K562 (cell line): ENCODE measurements at regions of chr18 and their contacts with region 1.

Region 1: DNA sequence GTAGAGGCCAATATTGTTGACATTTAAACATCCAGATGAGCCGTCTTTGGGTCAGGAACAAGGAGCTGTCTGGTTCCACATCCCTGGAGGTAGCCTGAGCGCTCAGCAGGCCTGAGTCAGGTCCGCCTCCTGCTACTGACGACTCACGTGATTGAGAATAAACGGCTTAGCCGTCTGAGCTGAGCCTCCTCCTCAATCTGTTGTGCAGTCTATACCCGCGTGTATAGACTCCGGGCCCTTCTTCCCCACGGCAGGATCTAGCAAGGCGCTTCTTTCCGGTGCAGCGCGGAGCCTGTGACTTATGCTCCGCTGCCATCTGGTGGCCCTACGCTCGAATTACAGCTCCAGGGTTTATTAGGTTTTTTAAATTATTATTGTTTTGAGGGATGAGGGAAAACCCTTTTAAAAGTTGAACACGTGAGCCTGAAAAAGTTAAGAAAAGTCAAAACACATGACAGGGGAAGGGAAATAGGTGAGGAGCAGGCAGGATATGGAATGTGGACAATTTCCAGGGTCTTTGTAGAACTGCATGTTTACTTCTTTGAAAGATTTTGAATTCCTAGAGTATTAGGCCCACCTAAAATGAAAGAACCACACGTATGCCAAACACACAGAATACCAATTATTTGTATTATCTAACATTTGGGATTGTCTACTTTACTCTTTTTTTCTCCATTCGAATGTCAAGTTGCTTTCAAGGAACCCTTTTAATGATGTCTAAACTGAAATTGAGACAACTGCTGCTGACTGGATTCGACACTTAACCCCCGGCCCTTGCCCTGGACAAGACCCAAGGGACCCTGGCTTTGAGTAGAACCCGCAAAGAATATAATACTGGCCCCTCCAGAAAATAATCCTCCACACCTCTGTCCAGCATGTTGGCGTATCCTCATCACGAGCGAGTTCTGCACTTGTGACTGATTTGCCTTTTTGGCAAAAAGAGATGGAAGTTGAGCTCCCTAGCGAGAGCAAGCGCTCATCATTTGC is 112.4 kb upstream of the ZNF236 start:
- DNase-seq: peak; percentile 41 to 56 (median 54)
- ATAC-seq: peak; percentile 90
- H3K4me3 ChIP-seq: no peak overlapping the region
- H3K27ac ChIP-seq: no peak overlapping the region
- H3K4me1 ChIP-seq: peaks cover 0 to 10% of the 10 kb centered on the region in 2 experiments; a peak in 1 of 5 replicates
- H3K27me3 ChIP-seq: peaks cover 0 to 23% of the 10 kb centered on the region in 2 experiments; a peak in 2 of 5 replicates
- CTCF ChIP-seq: peak; percentile 68 to 79 (median 72)
- EP300 ChIP-seq: no peak
- POLR2A ChIP-seq: no peak
- RAD21 ChIP-seq: peak; percentile 65 to 75

Region 2: DNA sequence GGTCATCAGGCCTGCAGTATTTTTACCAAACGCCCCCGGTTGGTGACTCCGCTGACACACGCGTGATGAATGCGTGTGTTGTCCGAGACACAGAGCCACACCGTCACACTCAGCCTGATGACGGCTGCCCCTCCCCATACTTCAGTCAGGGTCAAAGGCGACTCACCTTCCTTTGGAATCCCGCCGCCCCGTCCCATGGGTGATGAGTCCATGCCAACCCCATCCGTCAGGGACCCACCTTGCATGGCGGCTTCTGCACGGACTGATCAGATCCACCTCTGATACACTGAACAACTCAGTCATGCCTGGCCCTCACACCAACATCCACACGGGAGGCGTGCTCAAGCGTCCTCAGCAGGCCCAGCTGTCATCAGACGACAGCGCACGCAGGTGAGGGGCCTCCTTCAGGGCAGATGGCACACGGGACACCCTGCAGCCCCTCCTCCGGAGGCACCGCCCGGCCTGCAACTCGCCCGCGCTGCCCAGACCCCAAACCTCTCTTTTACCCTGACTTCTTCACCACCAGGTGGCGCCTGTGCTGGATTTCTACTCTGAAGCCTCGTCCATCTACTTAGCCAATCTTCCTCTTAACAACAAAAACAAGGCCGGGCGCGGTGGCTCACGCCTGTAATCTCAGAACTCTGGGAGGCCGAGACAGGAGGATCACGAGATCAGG is 304.1 kb before region 1 on chr18:
- CTCF ChIA-PET with region 1: interaction called, 7 read pairs
- POLR2A ChIA-PET with region 1: no interaction called
- in situ Hi-C with region 1: loop called (anchors 5 kb)
- intact Hi-C with region 1: no loop called
- DNase-seq: peak; percentile 28 to 46 (median 40)
- ATAC-seq: peak; percentile 84
- H3K4me3 ChIP-seq: no peak overlapping the region
- H3K27ac ChIP-seq: no peak overlapping the region
- H3K4me1 ChIP-seq: 0 out of 5 replicates have a peak, but pooled peaks cover 0 to 3% of the 10 kb centered on the region in 2 experiments
- H3K27me3 ChIP-seq: peaks cover 0 to 7% of the 10 kb centered on the region in 2 experiments; a peak in 1 of 5 replicates
- CTCF ChIP-seq: peak; percentile 35 to 47 (median 46); a peak in 5 of 6 replicates
- EP300 ChIP-seq: no peak
- POLR2A ChIP-seq: no peak
- RAD21 ChIP-seq: peak; percentile 13 to 36; a peak in 2 of 4 replicates

Region 3: GRCh38 chr18:76435316-76435989 is 274.5 kb before region 1 on chr18:
- CTCF ChIA-PET with region 1: no interaction called
- POLR2A ChIA-PET with region 1: no interaction called
- in situ Hi-C with region 1: no loop called
- intact Hi-C with region 1: no loop called
- DNase-seq: no peak
- ATAC-seq: no peak
- H3K4me3 ChIP-seq: no peak overlapping the region
- H3K27ac ChIP-seq: no peak overlapping the region
- H3K4me1 ChIP-seq: no peaks in the 10 kb centered on the region
- H3K27me3 ChIP-seq: peaks cover 0 to 55% of the 10 kb centered on the region in 2 experiments; a peak in 3 of 5 replicates
- CTCF ChIP-seq: peak in 1 of 3 experiments; percentile 7; a peak in 1 of 6 replicates
- EP300 ChIP-seq: no peak
- POLR2A ChIP-seq: no peak
- RAD21 ChIP-seq: no peak